Activated naive CD4-positive, alpha-beta T cell treated with anti-CD3 and anti-CD28 coated beads, Interleukin-2, amount 10 ng/mL, durations not matched to agents 7 days and 5 days (primary cell): ENCODE measurements at regions of chr5 and their contacts with region 1.

Region 1: DNA sequence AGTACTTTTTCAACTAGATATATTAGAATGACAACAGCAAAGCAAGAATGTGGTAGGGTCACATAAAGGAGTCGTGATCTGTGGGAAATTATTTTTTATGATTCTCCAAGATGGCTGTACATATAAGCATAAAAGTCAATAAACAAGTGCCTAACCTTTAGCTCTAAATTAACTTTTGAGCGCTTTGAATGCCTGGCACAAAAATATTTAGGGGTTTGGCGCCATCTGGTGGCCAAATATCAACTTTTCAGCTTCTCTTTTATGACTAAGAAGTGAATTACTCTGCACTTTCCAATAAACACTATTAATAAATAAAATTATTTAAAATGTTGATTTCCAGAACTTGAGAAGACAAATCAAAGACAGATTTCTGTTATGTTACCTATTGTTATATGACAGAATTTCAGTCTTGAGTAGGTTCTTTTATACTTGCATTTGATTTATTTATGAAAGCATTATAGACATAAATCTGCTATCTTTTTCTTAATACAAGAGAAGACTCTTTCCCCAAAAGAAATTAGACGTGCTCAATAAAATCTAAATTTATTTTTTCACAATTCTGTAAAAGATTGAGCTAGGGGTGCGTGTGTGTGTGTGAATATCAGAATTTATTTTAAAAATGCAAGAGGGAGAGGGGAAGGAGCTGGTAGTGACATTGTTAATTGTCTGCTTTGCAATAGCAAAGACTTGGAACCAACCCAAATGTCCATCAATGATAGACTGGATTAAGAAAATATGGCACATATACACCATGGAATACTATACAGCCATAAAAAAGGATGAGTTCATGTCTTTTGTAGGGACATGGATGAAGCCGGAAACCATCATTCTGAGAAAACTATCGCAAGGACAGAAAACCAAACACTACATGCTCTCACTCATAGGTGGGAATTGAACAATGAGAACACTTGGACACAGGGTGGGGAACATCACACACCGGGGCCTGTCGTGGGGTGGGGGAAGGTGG is 36.7 kb upstream of the ARRDC3 start:
- DNase-seq: peak; percentile 76
- H3K4me3 Mint-ChIP-seq: no peak overlapping the region
- H3K27ac Mint-ChIP-seq: no peak overlapping the region
- H3K4me1 Mint-ChIP-seq: peaks cover 2% of the 10 kb centered on the region
- H3K27me3 Mint-ChIP-seq: no peaks in the 10 kb centered on the region

Region 2: DNA sequence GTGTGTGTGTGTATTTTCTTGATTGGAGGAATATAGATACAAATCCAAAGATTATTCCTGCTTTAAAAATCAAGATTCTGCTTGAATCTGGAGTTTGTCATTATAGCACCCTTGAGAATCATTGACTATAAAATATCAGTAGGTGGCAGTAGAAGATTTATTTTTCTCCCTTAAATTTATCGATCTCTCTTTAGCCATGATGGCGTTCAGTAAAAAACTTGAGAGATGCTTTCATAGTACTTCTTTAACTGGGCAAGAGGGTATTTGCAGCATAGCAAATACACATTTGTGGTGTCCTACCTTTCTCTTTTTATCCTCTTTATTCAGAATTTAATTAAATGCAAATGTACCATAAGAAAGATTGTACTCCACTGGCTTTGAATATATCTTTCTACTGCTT is 553.5 kb before region 1 on chr5:
- CTCF ChIA-PET with region 1: interaction called, 20 read pairs
- DNase-seq: no peak
- H3K4me3 Mint-ChIP-seq: no peak overlapping the region
- H3K27ac Mint-ChIP-seq: no peak overlapping the region
- H3K4me1 Mint-ChIP-seq: peaks cover 3% of the 10 kb centered on the region
- H3K27me3 Mint-ChIP-seq: peaks cover 4% of the 10 kb centered on the region

Region 3: GRCh38 chr5:90932052-90932699 is 487.7 kb before region 1 on chr5:
- CTCF ChIA-PET with region 1: interaction called, 25 read pairs
- DNase-seq: peak; percentile 39
- H3K4me3 Mint-ChIP-seq: no peak overlapping the region
- H3K27ac Mint-ChIP-seq: no peak overlapping the region
- H3K4me1 Mint-ChIP-seq: no peaks in the 10 kb centered on the region
- H3K27me3 Mint-ChIP-seq: no peaks in the 10 kb centered on the region

Region 4: GRCh38 chr5:91101600-91102379 is 318.1 kb before region 1 on chr5:
- CTCF ChIA-PET with region 1: interaction called, 10 read pairs
- DNase-seq: peak; percentile 66
- H3K4me3 Mint-ChIP-seq: no peak overlapping the region
- H3K27ac Mint-ChIP-seq: no peak overlapping the region
- H3K4me1 Mint-ChIP-seq: no peaks in the 10 kb centered on the region
- H3K27me3 Mint-ChIP-seq: peaks cover 12% of the 10 kb centered on the region

Region 5: DNA sequence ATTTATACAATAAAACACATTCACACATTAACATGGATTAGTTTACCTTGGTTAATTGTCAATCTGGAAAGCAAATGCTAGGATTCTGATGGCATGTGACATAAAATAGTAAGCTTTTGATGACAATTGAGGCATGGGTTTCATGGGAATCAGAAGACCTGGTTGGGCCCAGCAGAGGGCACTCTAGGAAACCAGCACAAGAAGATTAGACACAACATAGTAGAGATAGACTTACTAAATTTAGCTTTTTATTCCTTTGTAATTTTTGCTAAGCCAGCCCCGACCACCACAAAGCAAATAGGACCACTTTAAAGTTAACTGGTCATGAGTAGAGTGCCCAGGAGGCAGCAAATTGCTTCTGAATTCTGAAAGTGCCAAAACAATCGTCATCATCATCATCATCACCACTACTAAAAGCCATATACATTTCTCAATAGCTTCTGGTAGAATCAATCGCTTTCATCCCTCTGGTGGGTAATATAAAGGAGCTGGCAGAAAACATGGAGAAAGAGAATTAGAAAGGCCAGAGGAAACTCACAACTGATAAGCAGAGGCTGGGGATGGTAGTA is 200.0 kb before region 1 on chr5:
- CTCF ChIA-PET with region 1: interaction called, 31 read pairs
- DNase-seq: peak; percentile 55
- H3K4me3 Mint-ChIP-seq: no peak overlapping the region
- H3K27ac Mint-ChIP-seq: no peak overlapping the region
- H3K4me1 Mint-ChIP-seq: no peaks in the 10 kb centered on the region
- H3K27me3 Mint-ChIP-seq: peaks cover 20% of the 10 kb centered on the region

Region 6: DNA sequence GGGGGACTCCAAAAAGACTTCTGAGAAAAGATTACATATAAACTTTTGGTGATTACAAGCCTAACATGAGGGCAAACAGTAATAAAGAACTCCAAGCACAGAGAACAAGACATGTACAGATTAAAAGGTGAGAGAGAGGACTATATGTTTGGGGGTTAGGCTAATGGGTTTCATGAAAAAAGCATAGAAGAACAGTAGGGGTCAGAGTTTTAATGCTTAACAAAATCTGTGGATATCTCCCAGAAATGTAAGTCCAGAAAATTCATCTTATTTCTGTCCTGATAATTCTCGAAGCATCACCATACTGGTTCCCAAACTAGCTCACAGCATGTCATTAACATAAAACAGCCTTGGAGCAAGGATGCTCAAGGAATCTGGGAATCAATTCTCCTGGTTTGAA is 174.0 kb before region 1 on chr5:
- CTCF ChIA-PET with region 1: no interaction called
- DNase-seq: no peak
- H3K4me3 Mint-ChIP-seq: no peak overlapping the region
- H3K27ac Mint-ChIP-seq: no peak overlapping the region
- H3K4me1 Mint-ChIP-seq: no peaks in the 10 kb centered on the region
- H3K27me3 Mint-ChIP-seq: peaks cover 3% of the 10 kb centered on the region

Region 7: GRCh38 chr5:91434348-91434747 is 14.5 kb after region 1 on chr5:
- CTCF ChIA-PET with region 1: interaction called, 11 read pairs
- DNase-seq: no peak
- H3K4me3 Mint-ChIP-seq: no peak overlapping the region
- H3K27ac Mint-ChIP-seq: no peak overlapping the region
- H3K4me1 Mint-ChIP-seq: peaks cover 17% of the 10 kb centered on the region
- H3K27me3 Mint-ChIP-seq: no peaks in the 10 kb centered on the region